ENCODE measurements at regions of chr2 and their contacts with region 1.

Region 1: DNA sequence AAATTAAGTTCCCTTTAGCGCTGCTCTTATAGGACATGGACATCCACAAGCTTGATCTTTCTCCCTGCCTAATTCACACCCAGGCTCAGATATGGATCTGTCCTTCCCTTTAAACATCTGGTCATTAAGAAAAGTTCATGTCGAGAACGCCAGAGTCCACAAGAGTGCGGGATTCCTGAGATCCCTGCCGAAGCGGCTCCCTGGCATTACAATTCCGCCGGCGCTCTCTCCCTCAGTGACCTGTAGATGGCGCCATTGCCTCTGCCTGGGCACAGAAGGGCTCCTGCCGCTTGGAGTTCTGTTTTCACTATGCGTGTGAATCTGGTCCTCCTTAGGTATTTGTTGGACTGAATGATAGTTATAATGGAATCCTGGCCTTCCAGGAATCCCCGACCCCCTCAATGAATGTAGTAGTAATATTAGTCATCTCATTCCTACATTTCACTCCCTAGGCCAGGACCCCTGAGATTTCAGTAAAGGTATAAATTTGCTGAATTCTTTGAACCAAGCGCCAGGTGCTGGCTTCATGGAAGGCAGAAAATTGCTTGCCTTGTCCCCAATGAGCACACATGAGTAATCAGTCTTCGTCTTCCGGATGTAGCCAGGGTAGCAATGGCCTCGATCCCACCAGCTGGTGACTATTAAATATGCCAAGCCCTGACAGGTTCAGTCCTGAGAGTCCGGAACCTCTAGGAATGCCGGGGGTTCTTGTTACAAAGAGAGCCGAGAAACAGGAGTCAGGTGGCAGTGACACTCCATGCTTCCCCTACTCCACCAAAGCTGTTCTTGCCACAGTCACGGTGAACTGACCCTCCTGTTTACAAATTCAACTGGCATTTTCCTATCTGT is 26.4 kb upstream of the CD207 start:
- DNase-seq: peak; percentile 93
- ATAC-seq: peak; percentile 89
- H3K4me3 Mint-ChIP-seq: no peak overlapping the region
- H3K27ac Mint-ChIP-seq: no peak overlapping the region
- H3K4me1 Mint-ChIP-seq: peaks cover 3% of the 10 kb centered on the region; the same call in 1 of the 2 replicates
- H3K27me3 Mint-ChIP-seq: peaks cover 85% of the 10 kb centered on the region
- CTCF ChIP-seq: peak; percentile 92

Region 2: DNA sequence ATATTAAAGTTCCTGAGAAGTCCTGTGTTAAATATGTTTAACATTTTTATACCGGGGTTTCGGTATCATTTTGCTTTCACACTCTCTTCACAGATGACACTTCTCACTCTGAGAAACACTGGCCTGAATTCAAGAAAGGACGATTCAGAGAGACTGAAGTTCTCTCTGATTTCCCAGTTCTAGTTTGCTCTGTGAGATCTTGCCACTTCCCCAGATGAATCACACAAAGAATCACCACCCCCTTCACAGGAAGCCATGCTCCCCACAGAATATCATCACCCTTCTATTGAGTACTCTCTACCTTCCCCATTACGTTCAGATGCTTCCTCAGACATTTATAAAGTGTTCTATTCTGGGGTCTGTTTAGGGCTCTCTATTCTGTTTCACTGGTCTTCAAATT is 10.3 kb before region 1 on chr2:
- CTCF ChIA-PET with region 1: interaction called, 10 read pairs
- POLR2A ChIA-PET with region 1: no interaction called
- DNase-seq: no peak
- ATAC-seq: no peak
- H3K4me3 Mint-ChIP-seq: no peak overlapping the region
- H3K27ac Mint-ChIP-seq: no peak overlapping the region
- H3K4me1 Mint-ChIP-seq: no peaks in the 10 kb centered on the region
- H3K27me3 Mint-ChIP-seq: peaks cover 35% of the 10 kb centered on the region
- CTCF ChIP-seq: no peak